MCF 10A (cell line): ENCODE measurements at regions of chr17 and their contacts with region 1.

Region 1: DNA sequence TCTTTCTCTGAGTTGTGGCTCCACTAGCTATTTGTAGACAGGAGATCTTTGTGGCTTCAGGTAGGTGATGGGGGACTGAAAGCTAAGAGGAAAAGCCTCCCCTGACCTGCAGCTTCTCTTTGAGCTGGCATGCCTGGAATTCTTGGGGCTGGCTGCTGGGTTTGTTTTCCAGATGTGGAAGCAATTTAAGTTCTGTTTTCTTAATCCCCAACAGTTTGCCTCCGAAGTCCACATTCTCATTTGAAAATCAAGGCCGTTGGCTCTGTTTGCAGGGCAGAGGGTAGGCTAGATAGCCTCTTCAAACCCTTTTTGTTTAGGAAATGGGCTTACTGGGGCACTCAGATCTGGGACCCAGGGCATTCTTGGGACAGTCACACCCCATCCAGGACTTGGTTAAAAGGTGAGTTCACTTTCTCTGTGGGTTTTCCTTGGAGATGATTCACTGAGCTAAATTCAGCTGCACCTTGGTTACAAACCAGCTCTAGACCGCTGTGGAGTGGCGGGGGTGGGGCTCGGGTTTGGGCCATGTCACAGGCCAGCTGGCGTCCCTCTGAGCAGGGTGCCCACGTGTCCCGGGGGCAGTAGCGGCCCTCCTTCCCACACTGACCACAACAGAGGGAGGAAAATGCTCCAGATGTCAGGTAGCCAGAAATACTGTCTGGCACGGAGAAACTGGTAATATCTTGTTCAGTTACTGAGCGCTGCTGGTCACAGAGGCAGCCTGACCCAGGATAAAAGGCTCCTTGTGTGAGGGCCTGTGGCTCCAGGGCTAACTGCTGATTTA is 108.5 kb downstream of the RAB11FIP4 start:
- DNase-seq: peak; percentile 38
- H3K4me3 Mint-ChIP-seq: no peak overlapping the region
- H3K27ac Mint-ChIP-seq: no peak overlapping the region
- H3K4me1 Mint-ChIP-seq: no peaks in the 10 kb centered on the region
- H3K27me3 Mint-ChIP-seq: no peaks in the 10 kb centered on the region
- CTCF ChIP-seq: no peak

Region 2: GRCh38 chr17:31391496-31391949 is 108.4 kb before region 1 on chr17 and contains the start of gene RAB11FIP4:
- CTCF ChIA-PET with region 1: no interaction called
- POLR2A ChIA-PET with region 1: no interaction called
- intact Hi-C with region 1: no loop called
- DNase-seq: no peak
- H3K4me3 Mint-ChIP-seq: peak within 1 kb of the TSS; percentile 39
- H3K27ac Mint-ChIP-seq: no peak within 1 kb of the TSS
- H3K4me1 Mint-ChIP-seq: no peaks in the 10 kb centered on the region
- H3K27me3 Mint-ChIP-seq: peaks cover 12% of the 10 kb centered on the region
- CTCF ChIP-seq: no peak
- total RNA-seq, gene RAB11FIP4: 2.8 and 3.7 TPM in 2 replicates

Region 3: GRCh38 chr17:31487648-31488263 is 12.2 kb before region 1 on chr17:
- CTCF ChIA-PET with region 1: interaction called, 5 read pairs
- POLR2A ChIA-PET with region 1: interaction called, 22 read pairs
- intact Hi-C with region 1: no loop called
- DNase-seq: peak; percentile 92
- H3K4me3 Mint-ChIP-seq: peak overlapping the region; percentile 77
- H3K27ac Mint-ChIP-seq: no peak overlapping the region
- H3K4me1 Mint-ChIP-seq: peaks cover 10% of the 10 kb centered on the region
- H3K27me3 Mint-ChIP-seq: no peaks in the 10 kb centered on the region
- CTCF ChIP-seq: no peak

Region 4: GRCh38 chr17:31510308-31511194 is 10.6 kb after region 1 on chr17:
- CTCF ChIA-PET with region 1: interaction called, 14 read pairs
- POLR2A ChIA-PET with region 1: interaction called, 3 read pairs
- intact Hi-C with region 1: no loop called
- DNase-seq: no peak
- H3K4me3 Mint-ChIP-seq: no peak overlapping the region
- H3K27ac Mint-ChIP-seq: no peak overlapping the region
- H3K4me1 Mint-ChIP-seq: no peaks in the 10 kb centered on the region
- H3K27me3 Mint-ChIP-seq: no peaks in the 10 kb centered on the region
- CTCF ChIP-seq: no peak

Region 5: GRCh38 chr17:31609996-31610910 is 110.3 kb after region 1 on chr17:
- CTCF ChIA-PET with region 1: no interaction called
- POLR2A ChIA-PET with region 1: no interaction called
- intact Hi-C with region 1: no loop called
- DNase-seq: no peak
- H3K4me3 Mint-ChIP-seq: no peak overlapping the region
- H3K27ac Mint-ChIP-seq: no peak overlapping the region
- H3K4me1 Mint-ChIP-seq: no peaks in the 10 kb centered on the region
- H3K27me3 Mint-ChIP-seq: no peaks in the 10 kb centered on the region
- CTCF ChIP-seq: no peak